ENCODE measurements at regions of chr20 and their contacts with region 1.

Region 1: DNA sequence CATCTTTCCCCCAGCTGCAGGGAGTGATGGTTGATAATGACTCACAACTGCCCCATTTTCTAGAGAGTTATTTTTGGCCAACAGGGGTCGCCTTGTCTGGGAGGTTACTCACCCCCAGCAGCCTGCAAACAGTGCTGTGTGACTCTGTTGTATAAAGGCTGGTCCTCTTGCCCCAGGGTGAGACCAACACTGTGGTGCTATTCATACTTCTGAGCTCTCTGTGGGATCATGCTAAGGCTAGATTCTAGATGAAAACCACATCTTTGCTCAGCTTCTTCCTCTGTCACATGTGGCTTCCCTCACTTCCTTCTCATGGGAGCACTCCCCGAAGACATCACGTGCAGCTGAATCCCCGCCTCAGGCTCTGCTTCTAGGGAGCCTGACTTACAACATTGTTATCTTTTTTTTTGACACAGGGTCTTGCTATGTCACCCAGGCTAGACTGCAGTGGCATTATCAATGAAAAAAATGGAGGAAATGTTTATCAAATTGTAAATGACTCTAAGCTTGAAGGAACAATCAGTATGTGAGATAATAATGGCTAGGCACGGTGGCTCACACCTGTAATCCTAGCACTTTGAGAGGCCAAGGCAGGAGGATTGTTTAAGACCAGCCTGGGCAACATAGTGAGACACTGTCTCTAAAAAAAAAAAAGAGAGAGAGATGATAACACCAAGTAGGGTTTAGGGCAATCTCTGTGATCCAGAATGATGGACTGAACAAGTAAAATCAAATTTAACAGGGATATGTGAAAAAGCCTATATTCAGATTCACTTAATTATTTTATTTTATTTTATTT is 55.7 kb upstream of the SLC23A2 start:
- DNase-seq: peak; percentile 41 to 88 (median 64)
- ATAC-seq: peak; percentile 95
- H3K4me3 ChIP-seq: no peak overlapping the region
- H3K4me3 Mint-ChIP-seq: peak overlapping the region; percentile 42
- H3K27ac ChIP-seq: peak overlapping the region in 1 of 2 donors; percentile 59
- H3K27ac Mint-ChIP-seq: peak overlapping the region; percentile 77
- H3K4me1 ChIP-seq: peaks cover 16% of the 10 kb centered on the region
- H3K4me1 Mint-ChIP-seq: peaks cover 22% of the 10 kb centered on the region
- H3K27me3 ChIP-seq: no peaks in the 10 kb centered on the region
- H3K27me3 Mint-ChIP-seq: no peaks in the 10 kb centered on the region
- CTCF ChIP-seq: peak; percentile 52

Region 2: DNA sequence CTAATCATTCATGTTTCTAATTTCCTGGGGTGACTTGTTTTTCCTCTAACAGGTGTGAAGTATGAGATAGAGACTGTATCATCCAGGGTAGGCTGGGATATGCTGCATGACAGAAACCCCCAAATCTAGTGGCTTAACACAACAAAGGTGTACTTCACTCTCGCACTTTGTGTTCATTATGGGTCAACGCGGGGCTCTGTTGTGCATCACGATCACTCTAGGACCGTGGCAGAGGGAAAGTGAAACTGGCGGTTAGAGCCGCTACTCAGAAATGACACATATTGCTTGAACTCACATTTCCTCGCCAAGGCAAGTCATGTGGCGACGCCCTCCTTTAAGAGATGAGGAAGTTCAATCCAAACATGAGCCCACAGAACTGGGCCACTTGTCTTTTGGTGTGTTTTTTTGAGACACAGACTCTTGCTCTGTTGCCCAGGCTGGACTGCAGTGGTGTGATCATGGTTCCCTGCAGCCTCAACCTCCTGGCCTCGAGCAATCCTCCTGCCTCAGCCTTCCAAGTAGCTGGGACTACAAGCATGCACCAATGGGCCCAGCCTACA is 21.5 kb after region 1 on chr20:
- CTCF ChIA-PET with region 1: interaction called, 15 read pairs
- POLR2A ChIA-PET with region 1: interaction called, 5 read pairs
- intact Hi-C with region 1: loop called in 1 of 2 experiments (anchors 1 kb)
- DNase-seq: peak; percentile 54 to 92 (median 69)
- ATAC-seq: peak; percentile 95
- H3K4me3 ChIP-seq: peak overlapping the region; percentile 55
- H3K4me3 Mint-ChIP-seq: peak overlapping the region; percentile 90
- H3K27ac ChIP-seq: peak overlapping the region; percentile 81 to 96
- H3K27ac Mint-ChIP-seq: peak overlapping the region; percentile 99
- H3K4me1 ChIP-seq: peaks cover 23% of the 10 kb centered on the region
- H3K4me1 Mint-ChIP-seq: peaks cover 29% of the 10 kb centered on the region
- H3K27me3 ChIP-seq: no peaks in the 10 kb centered on the region
- H3K27me3 Mint-ChIP-seq: no peaks in the 10 kb centered on the region
- CTCF ChIP-seq: no peak

Region 3: DNA sequence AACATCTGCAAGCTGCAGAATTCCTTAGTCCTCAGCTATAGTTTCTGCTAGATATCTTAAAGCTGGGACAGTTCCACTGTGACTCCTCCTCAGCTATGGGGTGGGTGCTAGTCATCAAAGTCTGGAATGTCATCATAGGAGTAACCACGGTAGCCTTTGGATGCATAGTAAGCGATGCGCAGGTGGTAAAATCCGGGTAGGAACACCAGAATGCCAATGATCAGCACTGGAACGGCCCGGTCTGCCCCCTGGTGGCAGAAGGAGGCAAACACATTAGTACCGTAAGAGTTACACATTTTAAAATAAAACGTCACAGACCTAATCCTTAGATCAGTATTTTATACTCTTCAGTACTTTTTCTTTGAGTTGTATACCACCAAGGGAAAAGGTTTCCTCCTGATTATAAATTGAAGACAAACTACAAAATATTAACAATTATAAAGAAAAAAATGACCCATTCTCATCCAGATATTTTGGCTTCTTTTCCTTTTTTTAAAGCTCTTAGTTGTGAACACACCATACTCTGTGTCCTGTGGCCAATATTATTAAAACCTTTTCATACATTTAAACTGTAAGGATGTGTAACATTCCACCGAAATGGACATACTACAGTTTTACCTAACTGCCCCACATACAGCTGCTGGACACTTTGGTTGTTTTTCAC is 43.8 kb after region 1 on chr20:
- CTCF ChIA-PET with region 1: interaction called, 31 read pairs
- POLR2A ChIA-PET with region 1: interaction called, 14 read pairs
- intact Hi-C with region 1: loop called (anchors 1 to 2 kb)
- DNase-seq: peak; percentile 60 to 86 (median 74)
- ATAC-seq: peak; percentile 95
- H3K4me3 ChIP-seq: no peak overlapping the region
- H3K4me3 Mint-ChIP-seq: no peak overlapping the region
- H3K27ac ChIP-seq: no peak overlapping the region
- H3K27ac Mint-ChIP-seq: peak overlapping the region; percentile 52
- H3K4me1 ChIP-seq: no peaks in the 10 kb centered on the region
- H3K4me1 Mint-ChIP-seq: peaks cover 17% of the 10 kb centered on the region
- H3K27me3 ChIP-seq: no peaks in the 10 kb centered on the region
- H3K27me3 Mint-ChIP-seq: no peaks in the 10 kb centered on the region
- CTCF ChIP-seq: peak; percentile 97

Region 4: GRCh38 chr20:5191829-5192569 is 135.0 kb after region 1 on chr20:
- CTCF ChIA-PET with region 1: interaction called, 4 read pairs
- POLR2A ChIA-PET with region 1: no interaction called
- intact Hi-C with region 1: loop called in 1 of 2 experiments (anchors 1 kb)
- DNase-seq: peak in 10 of 14 experiments; percentile 5 to 79 (median 16)
- ATAC-seq: peak; percentile 78
- H3K4me3 ChIP-seq: no peak overlapping the region
- H3K4me3 Mint-ChIP-seq: no peak overlapping the region
- H3K27ac ChIP-seq: no peak overlapping the region
- H3K27ac Mint-ChIP-seq: peak overlapping the region; percentile 54
- H3K4me1 ChIP-seq: peaks cover 4% of the 10 kb centered on the region
- H3K4me1 Mint-ChIP-seq: peaks cover 6% of the 10 kb centered on the region
- H3K27me3 ChIP-seq: no peaks in the 10 kb centered on the region
- H3K27me3 Mint-ChIP-seq: no peaks in the 10 kb centered on the region
- CTCF ChIP-seq: peak; percentile 73

Measured in CD4-positive, alpha-beta T cell (primary cell).